ENCODE measurements at regions of chr10 and their contacts with region 1.

Region 1: GRCh38 chr10:95693668-95694534 is at the start of gene TCTN3:
- DNase-seq: peak; percentile 93
- H3K4me3 ChIP-seq: peak within 1 kb of the TSS; percentile 71 to 85 (median 82)
- H3K27ac ChIP-seq: peak within 1 kb of the TSS; percentile 85 to 90 (median 88)
- H3K4me1 ChIP-seq: peaks cover 0 to 42% (median 18%) of the 10 kb centered on the region in 3 donors
- H3K27me3 ChIP-seq: no peaks in the 10 kb centered on the region
- CTCF ChIP-seq: peak; percentile 98 to 100 (median 100)
- POLR2A ChIP-seq: peak in 2 of 4 donors; percentile 79
- total RNA-seq, gene TCTN3: 6.8 to 21.1 (median 16.7) TPM

Region 2: DNA sequence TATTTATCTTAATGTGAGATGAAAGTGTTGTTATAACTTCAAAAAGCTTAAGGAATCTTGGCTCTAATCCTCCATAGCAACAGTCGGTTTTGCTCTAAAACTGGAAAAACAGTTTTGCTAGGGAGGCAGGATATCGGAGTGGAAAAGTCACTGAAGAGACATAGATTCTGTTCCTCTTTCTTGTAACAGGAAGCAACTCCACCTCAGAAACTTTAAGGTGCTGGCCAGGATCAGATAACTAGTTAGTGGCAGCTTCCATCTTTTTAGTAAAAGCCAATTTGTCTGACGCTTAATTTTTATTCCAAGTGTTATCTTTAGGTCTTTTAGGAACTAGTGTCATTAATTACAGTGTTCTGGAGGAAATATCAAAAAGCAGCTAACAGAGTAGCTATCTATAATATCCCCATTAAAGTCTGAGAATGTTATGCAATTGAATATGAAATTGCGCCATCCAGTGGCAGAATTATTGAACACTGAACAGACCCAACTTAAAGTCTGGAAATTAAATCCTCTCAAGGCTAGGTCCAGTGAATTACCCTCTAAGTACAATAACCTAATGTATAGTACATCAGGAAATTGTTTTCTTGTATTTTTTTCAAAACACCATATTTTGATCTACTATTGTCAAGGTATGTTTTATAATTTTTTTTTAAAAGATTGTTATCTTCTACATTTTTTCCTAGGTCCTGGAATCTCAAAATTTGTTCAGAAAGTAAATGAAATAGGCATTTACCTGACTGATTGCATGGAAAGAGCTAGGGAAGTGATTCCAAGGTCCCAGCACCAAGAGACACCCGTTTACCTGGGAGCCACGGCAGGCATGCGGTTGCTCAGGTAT is 148.0 kb after region 1 on chr10:
- intact Hi-C with region 1: loop called (anchors 2 kb)
- DNase-seq: no peak
- H3K4me3 ChIP-seq: no peak overlapping the region
- H3K27ac ChIP-seq: peak overlapping the region; percentile 3 to 76 (median 69)
- H3K4me1 ChIP-seq: peaks cover 8 to 44% (median 20%) of the 10 kb centered on the region in 3 donors
- H3K27me3 ChIP-seq: no peaks in the 10 kb centered on the region
- CTCF ChIP-seq: peak; percentile 60 to 78 (median 71)
- POLR2A ChIP-seq: no peak